Naive thymus-derived CD4-positive, alpha-beta T cell (primary cell): ENCODE measurements at regions of chr17 and their contacts with region 1.

Region 1: GRCh38 chr17:4420692-4421131 is 13.0 kb upstream of the SPNS3 start:
- DNase-seq: peak in 8 of 9 donors; percentile 34 to 75 (median 66)
- ATAC-seq: peak; percentile 96
- H3K4me3 ChIP-seq: no peak overlapping the region
- H3K4me3 Mint-ChIP-seq: no peak overlapping the region
- H3K27ac ChIP-seq: no peak overlapping the region
- H3K27ac Mint-ChIP-seq: no peak overlapping the region
- H3K4me1 ChIP-seq: peaks cover 0 to 4% of the 10 kb centered on the region in 2 donors
- H3K4me1 Mint-ChIP-seq: peaks cover 0 to 3% (median 0%) of the 10 kb centered on the region in 7 donors
- H3K27me3 ChIP-seq: no peaks in the 10 kb centered on the region
- H3K27me3 Mint-ChIP-seq: peaks cover 0 to 6% (median 0%) of the 10 kb centered on the region in 5 donors

Region 2: GRCh38 chr17:4340914-4341615 is 79.6 kb before region 1 on chr17:
- CTCF ChIA-PET with region 1: no interaction called
- POLR2A ChIA-PET with region 1: no interaction called
- intact Hi-C with region 1: no loop called
- DNase-seq: no peak
- ATAC-seq: no peak
- H3K4me3 ChIP-seq: no peak overlapping the region
- H3K4me3 Mint-ChIP-seq: no peak overlapping the region
- H3K27ac ChIP-seq: no peak overlapping the region
- H3K27ac Mint-ChIP-seq: no peak overlapping the region
- H3K4me1 ChIP-seq: peaks cover 0 to 16% of the 10 kb centered on the region in 2 donors
- H3K4me1 Mint-ChIP-seq: peaks cover 11 to 66% (median 46%) of the 10 kb centered on the region in 7 donors
- H3K27me3 ChIP-seq: no peaks in the 10 kb centered on the region
- H3K27me3 Mint-ChIP-seq: no peaks in the 10 kb centered on the region

Region 3: GRCh38 chr17:4433515-4434031 is 12.9 kb after region 1 on chr17 and contains the start of gene SPNS3:
- CTCF ChIA-PET with region 1: interaction called, 13 read pairs
- POLR2A ChIA-PET with region 1: no interaction called
- intact Hi-C with region 1: no loop called
- DNase-seq: peak in 6 of 9 donors; percentile 12 to 34 (median 26)
- ATAC-seq: peak; percentile 67
- H3K4me3 ChIP-seq: peak within 1 kb of the TSS; percentile 39
- H3K4me3 Mint-ChIP-seq: peak within 1 kb of the TSS; percentile 41 to 76 (median 66)
- H3K27ac ChIP-seq: no peak within 1 kb of the TSS
- H3K27ac Mint-ChIP-seq: peak within 1 kb of the TSS in 4 of 9 donors; percentile 11 to 84 (median 44)
- H3K4me1 ChIP-seq: peaks cover 7 to 18% of the 10 kb centered on the region in 2 donors
- H3K4me1 Mint-ChIP-seq: peaks cover 13 to 37% (median 23%) of the 10 kb centered on the region in 7 donors
- H3K27me3 ChIP-seq: no peaks in the 10 kb centered on the region
- H3K27me3 Mint-ChIP-seq: peaks cover 0 to 4% (median 0%) of the 10 kb centered on the region in 5 donors
- total RNA-seq, gene SPNS3: 1.7 to 6.7 (median 4.2) TPM

Region 4: GRCh38 chr17:4480929-4481898 is 60.5 kb after region 1 on chr17:
- CTCF ChIA-PET with region 1: interaction called, 3 read pairs
- POLR2A ChIA-PET with region 1: no interaction called
- intact Hi-C with region 1: loop called (anchors 2 to 5 kb)
- DNase-seq: peak in 6 of 9 donors; percentile 18 to 50 (median 30)
- ATAC-seq: peak; percentile 74
- H3K4me3 ChIP-seq: peak overlapping the region; percentile 51
- H3K4me3 Mint-ChIP-seq: peak overlapping the region; percentile 63 to 89 (median 84)
- H3K27ac ChIP-seq: peak overlapping the region; percentile 53
- H3K27ac Mint-ChIP-seq: peak overlapping the region; percentile 88 to 97 (median 92)
- H3K4me1 ChIP-seq: peaks cover 28% of the 10 kb centered on the region in 2 donors
- H3K4me1 Mint-ChIP-seq: peaks cover 27 to 59% (median 48%) of the 10 kb centered on the region in 7 donors
- H3K27me3 ChIP-seq: no peaks in the 10 kb centered on the region
- H3K27me3 Mint-ChIP-seq: no peaks in the 10 kb centered on the region

Region 5: GRCh38 chr17:4565209-4566141 is 144.8 kb after region 1 on chr17:
- CTCF ChIA-PET with region 1: interaction called, 4 read pairs
- POLR2A ChIA-PET with region 1: no interaction called
- intact Hi-C with region 1: loop called (anchors 1 to 2 kb)
- DNase-seq: peak in 8 of 9 donors; percentile 29 to 60 (median 50)
- ATAC-seq: peak; percentile 90
- H3K4me3 ChIP-seq: no peak overlapping the region
- H3K4me3 Mint-ChIP-seq: peak overlapping the region in 9 of 10 donors; percentile 44 to 77 (median 70)
- H3K27ac ChIP-seq: no peak overlapping the region
- H3K27ac Mint-ChIP-seq: peak overlapping the region in 3 of 9 donors; percentile 15 to 41 (median 21)
- H3K4me1 ChIP-seq: peaks cover 7 to 11% of the 10 kb centered on the region in 2 donors
- H3K4me1 Mint-ChIP-seq: peaks cover 15 to 40% (median 33%) of the 10 kb centered on the region in 7 donors
- H3K27me3 ChIP-seq: no peaks in the 10 kb centered on the region
- H3K27me3 Mint-ChIP-seq: peaks cover 0 to 17% (median 0%) of the 10 kb centered on the region in 5 donors

Region 6: GRCh38 chr17:5237541-5238016 is 816.9 kb after region 1 on chr17:
- CTCF ChIA-PET with region 1: no interaction called
- POLR2A ChIA-PET with region 1: no interaction called
- intact Hi-C with region 1: loop called in 1 of 2 experiments (anchors 5 kb)
- DNase-seq: peak in 2 of 9 donors; percentile 8 to 28
- ATAC-seq: peak; percentile 55
- H3K4me3 ChIP-seq: no peak overlapping the region
- H3K4me3 Mint-ChIP-seq: peak overlapping the region in 3 of 10 donors; percentile 8 to 32 (median 28)
- H3K27ac ChIP-seq: no peak overlapping the region
- H3K27ac Mint-ChIP-seq: peak overlapping the region in 6 of 9 donors; percentile 42 to 78 (median 60)
- H3K4me1 ChIP-seq: peaks cover 22 to 40% of the 10 kb centered on the region in 2 donors
- H3K4me1 Mint-ChIP-seq: peaks cover 11 to 44% (median 36%) of the 10 kb centered on the region in 7 donors
- H3K27me3 ChIP-seq: no peaks in the 10 kb centered on the region
- H3K27me3 Mint-ChIP-seq: peaks cover 0 to 2% (median 0%) of the 10 kb centered on the region in 5 donors